ENCODE measurements at regions of chr5 and their contacts with region 1.

Region 1: GRCh38 chr5:39217365-39218281 is 1.7 kb downstream of the FYB1 start:
- DNase-seq: peak in 8 of 9 donors; percentile 68 to 88 (median 83)
- ATAC-seq: peak; percentile 86
- H3K4me3 ChIP-seq: peak overlapping the region; percentile 74
- H3K4me3 Mint-ChIP-seq: peak overlapping the region; percentile 82 to 98 (median 86)
- H3K27ac ChIP-seq: peak overlapping the region; percentile 93
- H3K27ac Mint-ChIP-seq: peak overlapping the region; percentile 84 to 99 (median 94)
- H3K4me1 ChIP-seq: peaks cover 45 to 49% of the 10 kb centered on the region in 2 donors
- H3K4me1 Mint-ChIP-seq: peaks cover 44 to 89% (median 77%) of the 10 kb centered on the region in 7 donors
- H3K27me3 ChIP-seq: no peaks in the 10 kb centered on the region
- H3K27me3 Mint-ChIP-seq: no peaks in the 10 kb centered on the region

Region 2: DNA sequence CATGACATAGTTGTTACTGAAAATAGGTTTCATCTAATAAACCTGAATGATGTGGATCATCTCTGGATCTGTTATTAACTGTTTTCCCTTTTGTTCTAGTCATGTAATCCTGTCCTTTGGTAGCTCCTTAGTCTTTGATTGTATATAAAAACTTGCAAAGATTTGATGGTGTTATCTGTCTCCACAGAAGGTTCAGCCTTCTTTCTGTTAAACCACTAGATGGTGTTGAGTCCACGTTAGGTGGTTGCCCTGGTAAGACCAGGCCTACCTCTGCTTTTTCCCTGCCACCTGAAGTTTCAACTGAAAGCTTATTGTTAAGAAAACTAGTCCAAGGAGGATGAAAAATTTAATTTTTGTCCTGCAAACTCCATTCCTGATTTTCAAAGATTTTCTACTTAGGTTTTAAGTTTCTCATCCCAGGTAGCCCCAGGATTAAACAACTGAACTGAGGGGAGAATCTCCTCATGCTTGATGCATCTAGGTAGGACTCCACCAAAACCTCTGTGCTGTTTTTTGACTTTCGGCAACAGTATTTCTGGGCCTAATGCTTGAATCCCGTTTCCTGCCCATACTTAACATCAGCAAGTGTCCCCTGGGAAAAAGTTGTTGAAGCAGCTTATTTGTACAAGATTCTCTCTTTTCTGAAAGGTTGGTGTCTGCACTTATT is 211.9 kb before region 1 on chr5:
- CTCF ChIA-PET with region 1: no interaction called
- POLR2A ChIA-PET with region 1: no interaction called
- intact Hi-C with region 1: loop called in 1 of 2 experiments (anchors 2 kb)
- DNase-seq: peak in 6 of 9 donors; percentile 13 to 49 (median 34)
- ATAC-seq: peak; percentile 81
- H3K4me3 ChIP-seq: no peak overlapping the region
- H3K4me3 Mint-ChIP-seq: peak overlapping the region in 2 of 10 donors; percentile 10 to 27
- H3K27ac ChIP-seq: no peak overlapping the region
- H3K27ac Mint-ChIP-seq: peak overlapping the region in 8 of 9 donors; percentile 46 to 79 (median 68)
- H3K4me1 ChIP-seq: peaks cover 3 to 4% of the 10 kb centered on the region in 2 donors
- H3K4me1 Mint-ChIP-seq: peaks cover 23 to 71% (median 56%) of the 10 kb centered on the region in 7 donors
- H3K27me3 ChIP-seq: no peaks in the 10 kb centered on the region
- H3K27me3 Mint-ChIP-seq: no peaks in the 10 kb centered on the region

Region 3: DNA sequence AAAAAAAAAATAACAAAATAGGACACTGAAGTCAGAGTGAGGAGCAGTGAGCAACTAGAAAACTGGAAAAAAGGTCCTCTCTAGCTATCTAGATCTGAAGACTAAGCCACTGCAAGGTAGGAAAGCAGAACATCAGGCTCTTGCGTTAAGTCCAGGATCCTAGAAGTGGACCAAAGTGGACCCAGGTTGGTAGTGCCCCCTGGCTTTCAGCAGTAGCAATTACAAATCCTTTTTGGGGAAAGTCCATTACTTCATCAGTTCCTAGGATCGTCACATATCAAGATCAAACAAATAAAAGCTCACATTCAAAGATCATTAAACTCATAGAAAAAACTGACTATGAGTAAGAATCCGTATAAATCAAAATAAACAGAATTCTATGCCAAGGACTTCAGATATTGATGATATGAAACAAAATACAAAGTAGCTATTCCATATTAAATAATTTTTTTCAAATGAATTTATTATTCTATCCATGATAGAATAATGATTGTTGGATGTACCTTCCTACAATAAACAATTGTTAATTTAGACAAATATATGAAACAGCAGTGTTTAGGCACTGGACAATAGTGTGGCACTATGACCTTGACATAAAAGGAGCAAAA is 136.9 kb before region 1 on chr5:
- CTCF ChIA-PET with region 1: no interaction called
- POLR2A ChIA-PET with region 1: no interaction called
- intact Hi-C with region 1: no loop called
- DNase-seq: peak in 1 of 9 donors; percentile 28
- ATAC-seq: peak; percentile 81
- H3K4me3 ChIP-seq: no peak overlapping the region
- H3K4me3 Mint-ChIP-seq: no peak overlapping the region
- H3K27ac ChIP-seq: no peak overlapping the region
- H3K27ac Mint-ChIP-seq: no peak overlapping the region
- H3K4me1 ChIP-seq: peaks cover 0 to 5% of the 10 kb centered on the region in 2 donors
- H3K4me1 Mint-ChIP-seq: peaks cover 6 to 19% (median 17%) of the 10 kb centered on the region in 7 donors
- H3K27me3 ChIP-seq: peaks cover 14 to 17% of the 10 kb centered on the region in 2 donors
- H3K27me3 Mint-ChIP-seq: peaks cover 8 to 59% (median 29%) of the 10 kb centered on the region in 5 donors

Region 4: DNA sequence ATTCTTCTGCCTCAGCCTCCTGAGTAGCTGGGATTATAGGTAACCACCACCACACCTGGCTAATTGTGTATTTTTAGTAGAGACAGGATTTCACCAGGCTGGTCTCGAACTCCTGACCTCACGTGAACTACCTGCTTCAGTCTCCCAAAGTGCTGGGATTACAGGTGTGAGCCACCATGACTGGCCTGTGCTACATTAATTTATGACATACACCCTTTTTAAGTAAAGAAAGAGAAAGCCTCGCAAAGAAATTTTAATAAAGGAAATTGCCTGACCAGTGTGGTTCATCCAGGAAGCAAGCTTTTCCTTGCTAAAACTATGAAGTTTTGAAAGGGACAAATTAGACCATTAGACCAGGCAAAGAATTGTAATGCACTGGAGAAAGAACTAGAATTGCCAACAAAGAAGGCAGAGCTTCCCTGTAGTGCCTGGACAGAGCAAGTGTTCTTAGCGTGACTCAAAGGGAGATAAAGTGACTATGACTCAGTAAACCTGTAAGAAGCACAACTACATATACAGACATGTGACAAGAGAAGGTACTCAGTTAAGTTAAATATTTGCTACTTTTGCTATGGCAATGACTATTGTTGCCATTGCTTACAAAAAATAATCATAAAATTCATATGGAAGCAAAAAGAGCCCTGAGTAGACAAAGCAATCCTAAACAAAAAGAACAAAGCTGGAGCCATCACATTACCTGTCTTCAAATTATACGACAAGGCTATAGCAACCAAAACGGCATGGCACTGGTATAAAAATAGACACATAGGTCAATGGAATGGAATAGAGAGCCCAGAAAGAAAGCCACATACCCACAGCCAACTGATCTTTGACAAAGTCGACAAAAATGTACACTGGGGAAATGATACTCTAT is 52.9 kb before region 1 on chr5:
- CTCF ChIA-PET with region 1: interaction called, 16 read pairs
- POLR2A ChIA-PET with region 1: interaction called, 17 read pairs
- intact Hi-C with region 1: loop called in 1 of 2 experiments (anchors 1 kb)
- DNase-seq: peak in 1 of 9 donors; percentile 34
- ATAC-seq: peak; percentile 71
- H3K4me3 ChIP-seq: peak overlapping the region; percentile 12
- H3K4me3 Mint-ChIP-seq: peak overlapping the region; percentile 58 to 83 (median 76)
- H3K27ac ChIP-seq: peak overlapping the region; percentile 60
- H3K27ac Mint-ChIP-seq: peak overlapping the region; percentile 78 to 96 (median 89)
- H3K4me1 ChIP-seq: peaks cover 73 to 74% of the 10 kb centered on the region in 2 donors
- H3K4me1 Mint-ChIP-seq: peaks cover 71 to 99% (median 95%) of the 10 kb centered on the region in 7 donors
- H3K27me3 ChIP-seq: no peaks in the 10 kb centered on the region
- H3K27me3 Mint-ChIP-seq: no peaks in the 10 kb centered on the region

Region 5: DNA sequence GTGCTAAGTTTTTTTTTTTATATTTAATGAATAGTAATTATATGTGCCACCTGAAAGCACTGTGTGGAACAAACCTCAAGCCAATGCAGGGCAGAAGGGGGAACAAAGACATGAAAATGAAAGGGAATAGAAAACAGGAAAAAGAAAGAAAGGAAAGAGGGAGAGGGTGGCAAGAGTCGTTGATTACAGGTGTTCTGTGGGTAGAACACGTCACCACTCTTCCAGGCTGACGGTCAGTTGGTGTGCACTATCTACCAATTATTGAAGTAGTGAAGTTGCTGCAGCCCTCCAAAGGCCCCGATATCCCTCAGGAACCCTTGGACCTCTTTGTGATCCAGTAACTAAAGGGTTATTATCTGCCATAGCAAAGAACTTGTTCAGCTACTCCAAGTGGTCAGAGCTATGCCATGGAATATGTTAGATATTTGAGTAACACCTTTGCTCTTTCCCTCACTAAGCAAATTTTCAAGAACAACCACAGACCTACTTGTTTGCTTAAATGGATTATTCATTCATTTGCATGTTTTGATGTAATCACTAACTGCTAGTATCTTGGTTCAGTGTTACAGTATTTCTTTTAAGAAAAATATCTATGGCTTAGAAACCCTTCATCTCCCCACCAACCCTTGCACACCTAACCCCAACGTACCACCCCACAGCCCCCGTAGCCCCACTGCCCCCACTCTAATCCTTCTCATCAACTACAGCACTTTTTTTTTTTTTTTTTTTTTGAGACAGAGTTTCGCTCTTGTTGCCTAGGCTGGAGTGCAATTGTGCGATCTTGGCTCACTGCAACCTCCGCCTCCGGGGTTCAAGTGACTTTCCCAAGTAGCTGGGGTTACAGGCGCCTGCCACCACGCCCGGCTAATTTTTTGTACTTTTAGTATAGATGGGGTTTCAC is 29.5 kb before region 1 on chr5:
- CTCF ChIA-PET with region 1: interaction called, 168 read pairs
- POLR2A ChIA-PET with region 1: interaction called, 130 read pairs
- intact Hi-C with region 1: loop called in 1 of 2 experiments (anchors 2 kb)
- DNase-seq: peak in 2 of 9 donors; percentile 46 to 50
- ATAC-seq: peak; percentile 45
- H3K4me3 ChIP-seq: peak overlapping the region; percentile 36
- H3K4me3 Mint-ChIP-seq: peak overlapping the region; percentile 78 to 98 (median 88)
- H3K27ac ChIP-seq: peak overlapping the region; percentile 73
- H3K27ac Mint-ChIP-seq: peak overlapping the region; percentile 92 to 99 (median 98)
- H3K4me1 ChIP-seq: peaks cover 75 to 85% of the 10 kb centered on the region in 2 donors
- H3K4me1 Mint-ChIP-seq: peaks cover 58 to 97% (median 91%) of the 10 kb centered on the region in 7 donors
- H3K27me3 ChIP-seq: no peaks in the 10 kb centered on the region
- H3K27me3 Mint-ChIP-seq: no peaks in the 10 kb centered on the region

Region 6: DNA sequence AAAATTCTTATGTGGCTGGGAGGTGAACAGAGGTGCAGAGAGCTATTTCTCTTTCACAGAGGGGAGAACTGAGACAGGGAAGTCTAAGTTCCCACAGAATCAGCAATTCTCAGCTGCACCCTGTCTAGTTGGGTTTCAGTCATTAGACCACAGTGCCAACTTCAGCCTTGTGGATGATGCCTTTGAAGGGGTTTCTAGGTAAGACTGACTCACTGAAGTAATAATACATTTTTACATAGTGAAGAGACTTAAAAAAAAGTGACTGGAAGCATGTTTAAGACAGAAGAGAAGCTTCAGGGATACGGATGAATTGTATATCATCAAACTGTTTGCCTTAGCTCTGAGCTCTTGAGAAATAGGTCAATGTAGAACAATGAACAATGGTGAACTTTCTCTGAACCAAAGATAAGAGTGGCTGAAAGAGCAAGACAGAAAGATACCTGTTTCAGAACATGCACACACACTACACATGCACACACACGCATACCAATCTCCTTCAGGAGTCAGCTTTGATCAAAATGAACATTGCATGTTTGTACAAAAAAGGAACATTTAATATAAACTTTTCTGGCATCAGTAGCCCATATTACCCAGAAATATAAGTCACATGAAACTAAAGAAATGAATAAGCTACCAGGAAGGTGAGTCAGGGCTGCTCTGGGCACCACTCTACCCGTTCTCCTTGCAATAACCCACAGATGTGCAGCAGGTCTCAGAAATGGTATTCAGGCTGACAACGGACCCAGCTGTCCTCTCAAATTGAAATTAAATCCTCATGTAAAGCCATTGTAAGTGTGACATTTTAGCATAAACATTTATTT is 14.3 kb after region 1 on chr5:
- CTCF ChIA-PET with region 1: interaction called, 20 read pairs
- POLR2A ChIA-PET with region 1: interaction called, 13 read pairs
- intact Hi-C with region 1: no loop called
- DNase-seq: no peak
- ATAC-seq: peak; percentile 48
- H3K4me3 ChIP-seq: no peak overlapping the region
- H3K4me3 Mint-ChIP-seq: peak overlapping the region in 2 of 10 donors; percentile 39 to 55
- H3K27ac ChIP-seq: no peak overlapping the region
- H3K27ac Mint-ChIP-seq: peak overlapping the region in 3 of 9 donors; percentile 37 to 82 (median 65)
- H3K4me1 ChIP-seq: peaks cover 0 to 10% of the 10 kb centered on the region in 2 donors
- H3K4me1 Mint-ChIP-seq: peaks cover 12 to 25% (median 15%) of the 10 kb centered on the region in 7 donors
- H3K27me3 ChIP-seq: no peaks in the 10 kb centered on the region
- H3K27me3 Mint-ChIP-seq: no peaks in the 10 kb centered on the region

Region 7: GRCh38 chr5:39376293-39376714 is 158.7 kb after region 1 on chr5:
- CTCF ChIA-PET with region 1: interaction called, 10 read pairs
- POLR2A ChIA-PET with region 1: no interaction called
- intact Hi-C with region 1: loop called (anchors 5 kb)
- DNase-seq: peak in 8 of 9 donors; percentile 2 to 40 (median 26)
- ATAC-seq: peak; percentile 80
- H3K4me3 ChIP-seq: no peak overlapping the region
- H3K4me3 Mint-ChIP-seq: no peak overlapping the region
- H3K27ac ChIP-seq: no peak overlapping the region
- H3K27ac Mint-ChIP-seq: no peak overlapping the region
- H3K4me1 ChIP-seq: no peaks in the 10 kb centered on the region
- H3K4me1 Mint-ChIP-seq: peaks cover 0 to 5% (median 0%) of the 10 kb centered on the region in 7 donors
- H3K27me3 ChIP-seq: no peaks in the 10 kb centered on the region
- H3K27me3 Mint-ChIP-seq: peaks cover 0 to 32% (median 0%) of the 10 kb centered on the region in 5 donors

Region 8: DNA sequence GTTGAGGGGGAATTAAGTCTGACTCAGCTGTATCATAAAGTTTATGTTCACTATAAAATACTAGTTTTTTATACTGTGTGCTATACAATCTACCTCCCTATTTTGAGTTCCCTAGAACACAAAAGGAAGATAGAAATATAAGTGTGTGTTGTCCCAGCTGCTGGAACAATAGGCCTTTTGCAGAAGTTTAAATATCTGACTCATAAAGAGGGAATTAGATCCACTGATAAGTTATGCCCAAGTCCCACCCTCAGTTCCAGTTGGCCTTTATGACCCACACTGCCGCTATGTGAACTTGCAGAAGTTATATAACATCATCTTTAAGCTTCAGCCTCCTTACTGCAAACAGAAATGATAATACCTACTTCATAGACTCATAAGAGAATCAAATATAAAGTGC is 295.6 kb after region 1 on chr5:
- CTCF ChIA-PET with region 1: no interaction called
- POLR2A ChIA-PET with region 1: no interaction called
- intact Hi-C with region 1: no loop called
- DNase-seq: no peak
- ATAC-seq: no peak
- H3K4me3 ChIP-seq: no peak overlapping the region
- H3K4me3 Mint-ChIP-seq: no peak overlapping the region
- H3K27ac ChIP-seq: no peak overlapping the region
- H3K27ac Mint-ChIP-seq: no peak overlapping the region
- H3K4me1 ChIP-seq: no peaks in the 10 kb centered on the region
- H3K4me1 Mint-ChIP-seq: no peaks in the 10 kb centered on the region
- H3K27me3 ChIP-seq: no peaks in the 10 kb centered on the region
- H3K27me3 Mint-ChIP-seq: peaks cover 4 to 15% (median 6%) of the 10 kb centered on the region in 5 donors

Region 9: GRCh38 chr5:40755407-40756365 is 1538.1 kb after region 1 on chr5 and contains the start of gene TTC33:
- CTCF ChIA-PET with region 1: no interaction called
- POLR2A ChIA-PET with region 1: no interaction called
- intact Hi-C with region 1: loop called (anchors 10 kb)
- DNase-seq: peak; percentile 84 to 95 (median 91)
- ATAC-seq: peak; percentile 95
- H3K4me3 ChIP-seq: peak within 1 kb of the TSS; percentile 95
- H3K4me3 Mint-ChIP-seq: no peak within 1 kb of the TSS
- H3K27ac ChIP-seq: peak within 1 kb of the TSS; percentile 89
- H3K27ac Mint-ChIP-seq: peak within 1 kb of the TSS in 1 of 9 donors; percentile 32
- H3K4me1 ChIP-seq: peaks cover 9 to 11% of the 10 kb centered on the region in 2 donors
- H3K4me1 Mint-ChIP-seq: peaks cover 0 to 34% (median 17%) of the 10 kb centered on the region in 7 donors
- H3K27me3 ChIP-seq: no peaks in the 10 kb centered on the region
- H3K27me3 Mint-ChIP-seq: no peaks in the 10 kb centered on the region
- total RNA-seq, gene TTC33: 7.0 to 17.2 (median 14.0) TPM